GM12878 (cell line): ENCODE measurements at regions of chr1 and their contacts with region 1.

Region 1: DNA sequence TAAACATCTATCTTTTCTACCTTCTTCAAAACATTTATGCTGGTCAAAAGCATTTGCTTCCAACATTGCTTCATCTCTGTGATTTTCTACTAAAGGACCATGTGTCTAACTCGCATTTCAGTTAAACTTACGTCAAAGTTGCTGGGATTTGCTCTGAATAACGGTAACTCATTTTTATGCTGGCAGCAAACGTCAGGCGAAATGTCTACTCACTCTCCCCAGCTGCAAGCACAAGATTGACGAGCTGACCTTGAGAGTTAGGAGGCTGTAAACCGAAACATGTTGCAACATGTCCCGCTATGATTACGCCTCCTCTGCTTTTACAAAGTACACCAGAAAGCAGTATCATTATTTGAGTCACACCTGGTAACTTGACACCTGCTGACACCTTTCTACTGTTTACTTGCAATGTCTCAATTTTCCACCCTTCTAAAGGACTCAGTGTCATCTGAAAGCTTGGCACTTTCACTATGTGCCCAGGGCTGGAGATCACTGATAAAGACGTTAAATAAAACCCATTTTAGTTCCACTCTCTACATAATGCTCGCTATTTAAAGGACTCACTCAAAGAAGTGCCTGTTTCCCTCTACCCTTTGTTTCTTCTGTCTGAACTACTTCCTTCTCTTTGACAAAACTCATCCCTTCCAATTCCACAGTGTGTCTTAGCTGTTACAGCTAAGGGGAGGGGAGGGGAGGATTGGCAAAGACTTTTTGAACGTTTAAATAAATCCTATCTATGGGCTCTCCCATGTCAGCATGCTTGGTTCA is 111.9 kb downstream of the PTPN14 start:
- DNase-seq: peak; percentile 60
- ATAC-seq: peak; percentile 85
- H3K4me3 ChIP-seq: peak overlapping the region; percentile 0; the same call in 1 of the 2 replicates
- H3K27ac ChIP-seq: peak overlapping the region; percentile 43
- H3K4me1 ChIP-seq: peaks cover 12% of the 10 kb centered on the region
- H3K27me3 ChIP-seq: no peaks in the 10 kb centered on the region
- CTCF ChIP-seq: no peak
- EP300 ChIP-seq: peak; percentile 77 to 83; a peak in 3 of 4 replicates
- POLR2A ChIP-seq: 0 out of 2 replicates have a peak, but pooled peaks have one; percentile 47
- RAD21 ChIP-seq: no peak

Region 2: DNA sequence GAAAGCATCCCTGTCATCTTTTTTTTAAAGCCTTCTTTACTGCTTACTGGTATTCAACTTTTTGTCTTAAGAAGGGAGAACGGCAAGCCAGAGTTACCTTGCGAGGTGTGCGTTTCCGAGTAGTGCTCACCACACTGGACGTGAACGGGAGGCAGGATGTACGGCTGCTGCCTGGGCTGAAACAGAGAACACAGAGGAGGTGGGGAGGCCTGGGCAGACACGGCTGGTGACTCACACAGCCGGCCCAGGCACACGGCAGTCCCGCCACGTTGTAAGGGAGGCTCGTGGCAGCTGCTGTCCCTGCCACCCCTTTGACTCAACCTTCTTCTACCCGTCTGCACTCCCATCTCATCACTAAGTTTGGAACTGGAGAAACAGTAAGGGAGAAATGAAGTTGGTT is 52.8 kb before region 1 on chr1:
- CTCF ChIA-PET with region 1: interaction called, 5 read pairs
- POLR2A ChIA-PET with region 1: interaction called, 5 read pairs
- RAD21 ChIA-PET with region 1: interaction called, 13 read pairs
- SMC1A ChIA-PET with region 1: interaction called, 6 read pairs
- in situ Hi-C with region 1: no loop called
- intact Hi-C with region 1: no loop called
- DNase-seq: no peak
- ATAC-seq: peak; percentile 42; the same call in 2 of the 3 replicates
- H3K4me3 ChIP-seq: no peak overlapping the region
- H3K27ac ChIP-seq: no peak overlapping the region
- H3K4me1 ChIP-seq: no peaks in the 10 kb centered on the region
- H3K27me3 ChIP-seq: peaks cover 0 to 2% of the 10 kb centered on the region in 2 experiments; a peak in 1 of 4 replicates
- CTCF ChIP-seq: no peak
- EP300 ChIP-seq: no peak
- POLR2A ChIP-seq: no peak
- RAD21 ChIP-seq: no peak

Region 3: GRCh38 chr1:214416417-214416816 is 23.1 kb before region 1 on chr1:
- CTCF ChIA-PET with region 1: interaction called, 4 read pairs
- POLR2A ChIA-PET with region 1: interaction called, 4 read pairs
- RAD21 ChIA-PET with region 1: interaction called, 13 read pairs
- SMC1A ChIA-PET with region 1: interaction called, 21 read pairs
- in situ Hi-C with region 1: no loop called
- intact Hi-C with region 1: no loop called
- DNase-seq: no peak
- ATAC-seq: no peak
- H3K4me3 ChIP-seq: no peak overlapping the region
- H3K27ac ChIP-seq: no peak overlapping the region
- H3K4me1 ChIP-seq: no peaks in the 10 kb centered on the region
- H3K27me3 ChIP-seq: no peaks in the 10 kb centered on the region
- CTCF ChIP-seq: no peak
- EP300 ChIP-seq: no peak
- POLR2A ChIP-seq: no peak
- RAD21 ChIP-seq: no peak

Region 4: DNA sequence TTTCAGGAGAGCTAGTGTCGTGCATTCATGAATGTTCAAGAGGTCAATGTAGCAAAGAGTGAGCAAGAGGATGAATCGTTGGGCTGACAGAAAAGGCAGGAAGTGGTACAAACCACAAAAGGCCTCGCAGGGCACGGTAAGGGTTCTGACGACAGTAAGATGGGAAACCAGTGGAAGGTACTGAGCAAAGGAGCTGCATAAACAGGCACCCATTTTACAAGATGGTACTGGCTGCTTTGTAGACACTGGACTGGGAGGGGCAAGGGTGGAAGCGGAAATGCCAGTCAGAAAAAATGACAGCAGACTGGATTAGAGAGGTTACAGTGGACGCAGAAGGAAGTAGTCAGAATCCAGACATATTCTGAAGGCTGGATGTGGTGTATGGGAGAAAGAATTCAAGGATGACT is 11.7 kb before region 1 on chr1:
- CTCF ChIA-PET with region 1: interaction called, 5 read pairs
- POLR2A ChIA-PET with region 1: interaction called, 8 read pairs
- RAD21 ChIA-PET with region 1: interaction called, 15 read pairs
- SMC1A ChIA-PET with region 1: interaction called, 27 read pairs
- in situ Hi-C with region 1: no loop called
- intact Hi-C with region 1: no loop called
- DNase-seq: peak; percentile 80
- ATAC-seq: peak; percentile 97
- H3K4me3 ChIP-seq: no peak overlapping the region
- H3K27ac ChIP-seq: peak overlapping the region; percentile 57
- H3K4me1 ChIP-seq: peaks cover 7% of the 10 kb centered on the region
- H3K27me3 ChIP-seq: no peaks in the 10 kb centered on the region
- CTCF ChIP-seq: no peak
- EP300 ChIP-seq: peak; percentile 56 to 75; a peak in 3 of 4 replicates
- POLR2A ChIP-seq: no peak; the same call in 1 of the 2 replicates
- RAD21 ChIP-seq: no peak

Region 5: GRCh38 chr1:214466403-214467077 is 27.0 kb after region 1 on chr1:
- CTCF ChIA-PET with region 1: interaction called, 3 read pairs
- POLR2A ChIA-PET with region 1: interaction called, 3 read pairs
- RAD21 ChIA-PET with region 1: interaction called, 5 read pairs
- SMC1A ChIA-PET with region 1: interaction called, 10 read pairs
- in situ Hi-C with region 1: no loop called
- intact Hi-C with region 1: no loop called
- DNase-seq: no peak
- ATAC-seq: no peak
- H3K4me3 ChIP-seq: no peak overlapping the region
- H3K27ac ChIP-seq: no peak overlapping the region
- H3K4me1 ChIP-seq: no peaks in the 10 kb centered on the region
- H3K27me3 ChIP-seq: no peaks in the 10 kb centered on the region; a peak in 1 of 4 replicates
- CTCF ChIP-seq: no peak
- EP300 ChIP-seq: no peak
- POLR2A ChIP-seq: no peak
- RAD21 ChIP-seq: no peak

Region 6: GRCh38 chr1:214542275-214543199 is 103.0 kb after region 1 on chr1:
- CTCF ChIA-PET with region 1: interaction called, 4 read pairs
- POLR2A ChIA-PET with region 1: interaction called, 4 read pairs
- RAD21 ChIA-PET with region 1: interaction called, 10 read pairs
- SMC1A ChIA-PET with region 1: interaction called, 15 read pairs
- in situ Hi-C with region 1: no loop called
- intact Hi-C with region 1: no loop called
- DNase-seq: no peak
- ATAC-seq: no peak; the same call in 1 of the 3 replicates
- H3K4me3 ChIP-seq: no peak overlapping the region
- H3K27ac ChIP-seq: no peak overlapping the region
- H3K4me1 ChIP-seq: no peaks in the 10 kb centered on the region
- H3K27me3 ChIP-seq: no peaks in the 10 kb centered on the region; a peak in 1 of 4 replicates
- CTCF ChIP-seq: no peak
- EP300 ChIP-seq: no peak
- POLR2A ChIP-seq: no peak
- RAD21 ChIP-seq: no peak

Region 7: DNA sequence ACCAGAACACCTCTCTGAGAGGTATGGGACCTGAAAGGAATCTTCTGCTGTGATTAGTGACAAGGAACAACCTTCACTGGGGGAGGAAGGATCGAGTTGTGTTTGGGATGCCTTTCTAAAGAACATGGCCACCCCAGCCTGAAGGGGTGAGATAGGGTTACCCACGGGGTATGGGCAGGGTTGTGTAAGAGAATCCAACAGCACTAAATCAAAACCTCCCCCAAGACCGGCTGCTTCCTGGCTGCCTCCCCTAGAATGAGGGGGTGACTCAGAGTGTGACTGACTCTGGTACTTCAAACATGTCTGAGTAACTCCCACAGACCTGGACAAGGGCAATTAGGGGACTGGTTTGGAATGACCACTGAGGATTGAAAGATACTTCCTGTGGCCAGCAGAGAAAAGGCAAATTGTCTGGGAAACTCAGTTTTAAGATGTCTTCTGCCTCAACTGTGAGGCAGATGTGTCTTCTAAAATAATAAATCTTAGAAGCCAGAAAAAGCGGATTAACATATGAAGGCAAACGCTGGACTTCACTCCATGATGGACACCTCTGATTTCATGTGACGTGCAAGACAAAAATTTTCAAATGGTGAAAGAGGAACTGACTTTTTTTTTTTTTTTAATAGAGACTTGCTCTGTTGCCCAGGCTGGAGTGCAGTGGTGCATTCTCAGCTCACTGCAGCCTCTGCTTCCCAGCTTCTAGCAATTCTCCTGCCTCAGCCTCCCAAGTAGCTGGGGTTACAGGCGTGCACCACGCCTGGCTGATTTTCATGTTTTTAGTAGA is 118.6 kb after region 1 on chr1:
- CTCF ChIA-PET with region 1: interaction called, 7 read pairs
- POLR2A ChIA-PET with region 1: interaction called, 4 read pairs
- RAD21 ChIA-PET with region 1: interaction called, 7 read pairs
- SMC1A ChIA-PET with region 1: interaction called, 13 read pairs
- in situ Hi-C with region 1: no loop called
- intact Hi-C with region 1: loop called (anchors 5 kb)
- DNase-seq: no peak
- ATAC-seq: peak; percentile 69
- H3K4me3 ChIP-seq: no peak overlapping the region
- H3K27ac ChIP-seq: no peak overlapping the region
- H3K4me1 ChIP-seq: no peaks in the 10 kb centered on the region
- H3K27me3 ChIP-seq: no peaks in the 10 kb centered on the region; a peak in 1 of 4 replicates
- CTCF ChIP-seq: no peak
- EP300 ChIP-seq: no peak
- POLR2A ChIP-seq: no peak
- RAD21 ChIP-seq: no peak

Region 8: GRCh38 chr1:214637722-214638458 is 198.4 kb after region 1 on chr1:
- CTCF ChIA-PET with region 1: no interaction called
- POLR2A ChIA-PET with region 1: no interaction called
- RAD21 ChIA-PET with region 1: no interaction called
- SMC1A ChIA-PET with region 1: no interaction called
- in situ Hi-C with region 1: no loop called
- intact Hi-C with region 1: no loop called
- DNase-seq: no peak
- ATAC-seq: peak; percentile 72
- H3K4me3 ChIP-seq: no peak overlapping the region
- H3K27ac ChIP-seq: no peak overlapping the region
- H3K4me1 ChIP-seq: no peaks in the 10 kb centered on the region
- H3K27me3 ChIP-seq: no peaks in the 10 kb centered on the region
- CTCF ChIP-seq: peak; percentile 52 to 63 (median 56)
- EP300 ChIP-seq: no peak
- POLR2A ChIP-seq: no peak
- RAD21 ChIP-seq: peak; percentile 57